Breast epithelium (tissue), 4 donors: ENCODE measurements at regions of chr10 and their contacts with region 1.

Region 1: GRCh38 chr10:107144490-107144889 is 20.0 kb downstream of the SORCS1 start:
- DNase-seq: no peak
- H3K4me3 ChIP-seq: no peak overlapping the region
- H3K27ac ChIP-seq: no peak overlapping the region
- H3K4me1 ChIP-seq: no peaks in the 10 kb centered on the region
- H3K27me3 ChIP-seq: no peaks in the 10 kb centered on the region
- CTCF ChIP-seq: no peak
- POLR2A ChIP-seq: no peak

Region 2: GRCh38 chr10:105291571-105291970 is 1852.9 kb before region 1 on chr10:
- intact Hi-C with region 1: loop called (anchors 5 kb)
- DNase-seq: no peak
- H3K4me3 ChIP-seq: no peak overlapping the region
- H3K27ac ChIP-seq: no peak overlapping the region
- H3K4me1 ChIP-seq: no peaks in the 10 kb centered on the region
- H3K27me3 ChIP-seq: no peaks in the 10 kb centered on the region
- CTCF ChIP-seq: no peak
- POLR2A ChIP-seq: no peak

Region 3: DNA sequence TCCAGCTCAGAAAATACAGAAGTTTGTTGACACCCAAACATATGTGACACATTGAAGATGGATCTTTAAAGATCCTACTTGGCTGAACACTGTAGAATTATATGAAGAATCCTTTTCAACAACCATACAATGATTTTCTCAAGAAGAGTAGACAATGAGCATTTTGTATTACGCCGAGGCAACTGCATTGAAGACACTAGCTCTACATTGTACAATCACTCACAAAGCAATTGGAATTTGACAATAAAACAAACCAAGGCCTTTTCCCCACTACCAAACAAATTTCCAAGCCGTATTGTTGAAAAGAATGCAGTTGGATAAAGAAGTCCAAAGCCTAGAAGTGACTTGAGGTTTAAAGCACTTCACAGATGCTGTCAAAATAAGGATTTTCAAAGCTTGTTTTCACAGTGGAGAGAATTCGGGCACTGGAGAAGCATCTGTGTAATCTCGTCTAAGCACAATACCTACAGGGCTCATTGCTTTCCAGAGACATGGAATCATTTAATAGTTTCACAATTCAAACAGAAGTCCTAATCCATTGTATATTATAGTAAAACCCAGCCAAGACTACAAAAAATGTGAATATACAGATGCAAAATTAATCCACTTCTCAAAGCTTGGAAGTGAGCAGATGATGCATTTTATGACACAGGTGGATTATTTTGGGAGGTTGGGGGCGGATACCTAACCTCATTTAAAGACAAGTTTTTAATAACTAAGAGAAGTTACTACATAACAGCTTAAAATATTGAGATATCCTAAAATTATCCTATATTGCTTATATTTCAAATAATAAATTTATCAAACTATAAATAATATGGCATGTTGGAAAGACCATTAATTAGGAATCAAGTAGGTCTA is 58.6 kb before region 1 on chr10:
- intact Hi-C with region 1: loop called (anchors 2 kb)
- DNase-seq: no peak
- H3K4me3 ChIP-seq: no peak overlapping the region
- H3K27ac ChIP-seq: no peak overlapping the region
- H3K4me1 ChIP-seq: no peaks in the 10 kb centered on the region
- H3K27me3 ChIP-seq: no peaks in the 10 kb centered on the region
- CTCF ChIP-seq: no peak
- POLR2A ChIP-seq: no peak